PC-3 (cell line): ENCODE measurements at regions of chr3 and their contacts with region 1.

Region 1: GRCh38 chr3:32296256-32297204 is 58.0 kb downstream of the CMTM8 start:
- DNase-seq: peak; percentile 73
- ATAC-seq: peak; percentile 94
- H3K4me3 ChIP-seq: no peak overlapping the region
- H3K27ac ChIP-seq: no peak overlapping the region
- H3K4me1 ChIP-seq: 0 out of 2 replicates have a peak, but pooled peaks cover 2% of the 10 kb centered on the region
- H3K27me3 ChIP-seq: no peaks in the 10 kb centered on the region
- CTCF ChIP-seq: peak; percentile 93

Region 2: DNA sequence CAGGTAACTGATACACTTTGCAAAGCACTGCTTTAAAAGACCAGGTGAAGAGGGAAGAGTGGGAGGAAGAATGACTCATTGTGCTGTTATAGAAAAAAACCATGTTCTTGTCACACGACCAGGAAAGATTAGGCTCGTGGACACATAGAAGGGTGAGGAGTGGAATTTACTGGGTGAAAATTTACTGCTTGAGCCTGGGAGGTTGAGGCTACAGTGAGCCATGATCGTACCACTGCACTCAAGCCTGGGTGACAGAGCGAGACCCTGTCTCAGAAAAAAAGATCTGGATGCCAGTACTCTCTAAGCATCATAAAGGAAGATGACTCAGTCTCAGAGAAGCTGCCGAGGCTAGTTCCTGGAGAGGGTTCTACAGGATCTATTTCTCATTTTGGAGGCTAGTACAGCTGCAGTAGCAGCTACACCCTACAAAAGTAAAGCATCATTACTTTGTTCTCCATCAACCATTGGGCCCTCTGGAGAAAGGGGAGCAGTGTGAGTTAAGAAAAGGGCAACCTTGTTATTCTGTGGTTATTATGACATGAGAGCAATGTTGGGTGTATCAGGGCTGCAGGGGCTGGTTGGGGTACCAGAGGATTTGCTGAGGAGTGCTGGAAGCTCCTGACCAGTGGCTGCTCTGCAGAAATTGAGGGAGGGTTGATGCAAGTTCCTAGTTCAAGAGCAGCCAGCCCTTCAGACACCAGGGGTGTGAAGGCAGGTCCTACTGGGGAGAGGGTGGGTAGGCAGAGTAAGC is 17.4 kb after region 1 on chr3:
- CTCF ChIA-PET with region 1: no interaction called
- POLR2A ChIA-PET with region 1: no interaction called
- intact Hi-C with region 1: no loop called
- DNase-seq: peak; percentile 76
- ATAC-seq: peak; percentile 95
- H3K4me3 ChIP-seq: peak overlapping the region; percentile 50; the same call in 1 of the 2 replicates
- H3K27ac ChIP-seq: peak overlapping the region; percentile 13; the same call in 1 of the 2 replicates
- H3K4me1 ChIP-seq: peaks cover 16% of the 10 kb centered on the region
- H3K27me3 ChIP-seq: no peaks in the 10 kb centered on the region
- CTCF ChIP-seq: no peak

Region 3: GRCh38 chr3:32340039-32340438 is 43.5 kb after region 1 on chr3:
- CTCF ChIA-PET with region 1: no interaction called
- POLR2A ChIA-PET with region 1: no interaction called
- intact Hi-C with region 1: loop called (anchors 2 kb)
- DNase-seq: peak; percentile 74
- ATAC-seq: peak; percentile 94
- H3K4me3 ChIP-seq: no peak overlapping the region
- H3K27ac ChIP-seq: no peak overlapping the region
- H3K4me1 ChIP-seq: no peaks in the 10 kb centered on the region
- H3K27me3 ChIP-seq: no peaks in the 10 kb centered on the region
- CTCF ChIP-seq: peak; percentile 83

Region 4: GRCh38 chr3:32438596-32439344 is 142.2 kb after region 1 on chr3:
- CTCF ChIA-PET with region 1: no interaction called
- POLR2A ChIA-PET with region 1: no interaction called
- intact Hi-C with region 1: no loop called
- DNase-seq: no peak
- ATAC-seq: no peak
- H3K4me3 ChIP-seq: no peak overlapping the region
- H3K27ac ChIP-seq: no peak overlapping the region
- H3K4me1 ChIP-seq: peaks cover 12% of the 10 kb centered on the region
- H3K27me3 ChIP-seq: no peaks in the 10 kb centered on the region
- CTCF ChIP-seq: no peak

Region 5: GRCh38 chr3:32484436-32484835 is 187.9 kb after region 1 on chr3:
- CTCF ChIA-PET with region 1: no interaction called
- POLR2A ChIA-PET with region 1: no interaction called
- intact Hi-C with region 1: no loop called
- DNase-seq: no peak
- ATAC-seq: no peak
- H3K4me3 ChIP-seq: no peak overlapping the region
- H3K27ac ChIP-seq: no peak overlapping the region
- H3K4me1 ChIP-seq: no peaks in the 10 kb centered on the region
- H3K27me3 ChIP-seq: no peaks in the 10 kb centered on the region
- CTCF ChIP-seq: no peak